ENCODE measurements at regions of chr18 and their contacts with region 1.

Region 1: GRCh38 chr18:3454365-3455089 is 4.6 kb downstream of the TGIF1 start:
- DNase-seq: no peak
- ATAC-seq: no peak
- H3K4me3 Mint-ChIP-seq: peak overlapping the region; percentile 93
- H3K27ac Mint-ChIP-seq: peak overlapping the region; percentile 95
- H3K4me1 Mint-ChIP-seq: peaks cover 57% of the 10 kb centered on the region
- H3K27me3 Mint-ChIP-seq: no peaks in the 10 kb centered on the region
- CTCF ChIP-seq: no peak

Region 2: DNA sequence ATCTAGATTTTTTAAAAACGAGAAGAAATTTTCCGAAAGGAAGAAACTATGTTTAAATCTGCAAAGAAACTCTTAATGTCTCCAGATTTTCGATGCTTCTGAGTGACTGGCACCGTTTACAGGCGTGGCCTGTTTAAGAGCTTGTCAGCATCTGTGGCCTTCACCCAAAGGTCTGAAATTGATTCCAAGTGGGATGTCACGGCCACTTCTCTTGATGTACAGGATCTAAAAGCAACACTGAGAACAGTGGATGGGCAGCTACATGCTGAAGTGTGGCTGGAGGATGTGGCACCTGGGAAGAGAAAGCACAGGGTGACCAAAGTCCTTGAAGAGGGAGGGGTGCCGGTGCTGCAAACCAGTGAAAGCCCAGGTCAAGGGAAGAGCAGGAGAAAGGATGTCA is 579.8 kb before region 1 on chr18:
- CTCF ChIA-PET with region 1: no interaction called
- POLR2A ChIA-PET with region 1: no interaction called
- intact Hi-C with region 1: no loop called
- DNase-seq: no peak
- ATAC-seq: no peak
- H3K4me3 Mint-ChIP-seq: no peak overlapping the region
- H3K27ac Mint-ChIP-seq: no peak overlapping the region
- H3K4me1 Mint-ChIP-seq: no peaks in the 10 kb centered on the region
- H3K27me3 Mint-ChIP-seq: no peaks in the 10 kb centered on the region
- CTCF ChIP-seq: no peak

Region 3: DNA sequence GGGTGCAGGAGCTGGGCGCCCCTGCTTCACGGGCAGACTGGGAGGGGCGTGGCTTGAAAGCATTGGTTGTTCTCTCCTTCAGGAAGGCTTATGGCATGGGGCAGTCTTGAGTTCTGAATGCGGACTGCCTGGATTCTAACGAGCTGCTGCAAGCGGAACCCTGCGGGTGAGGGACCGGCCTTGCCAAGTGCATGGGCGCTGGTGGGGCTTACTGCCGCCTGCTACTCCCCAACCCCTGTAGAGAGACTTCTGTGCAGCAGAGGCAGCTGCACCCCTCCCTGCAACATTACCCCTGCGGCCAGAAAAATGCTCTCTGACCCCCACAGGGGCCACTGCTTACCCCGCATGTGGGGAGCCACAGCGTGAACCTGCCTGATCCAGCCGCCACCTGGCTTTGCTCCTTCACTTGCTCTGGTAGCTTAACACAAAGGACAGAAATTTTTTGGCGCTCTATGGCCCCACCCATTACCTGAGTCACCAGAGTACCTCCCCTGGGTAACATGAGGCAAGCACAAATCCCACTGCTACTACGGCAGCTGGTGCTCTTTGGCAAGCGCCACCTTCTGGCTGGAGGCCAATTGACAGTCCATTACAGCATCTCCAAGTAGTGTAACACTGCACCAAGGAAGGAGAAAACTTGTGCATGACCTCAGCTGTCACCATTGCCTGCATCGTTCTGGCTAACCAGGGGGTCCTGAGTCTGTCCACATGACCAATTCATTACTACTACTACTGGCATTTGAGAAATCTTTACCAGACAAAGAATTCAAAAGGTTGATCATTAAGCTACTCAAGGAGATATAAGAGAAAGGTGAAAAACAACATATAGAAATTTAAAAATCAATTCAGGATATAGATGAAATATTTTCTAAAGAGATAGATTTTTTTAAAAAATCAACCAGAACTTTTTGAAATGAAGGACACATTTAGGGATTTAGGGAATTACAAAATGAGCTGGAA is 157.2 kb before region 1 on chr18:
- CTCF ChIA-PET with region 1: interaction called, 26 read pairs
- POLR2A ChIA-PET with region 1: interaction called, 20 read pairs
- intact Hi-C with region 1: loop called (anchors 1 kb)
- DNase-seq: peak; percentile 82
- ATAC-seq: peak; percentile 99
- H3K4me3 Mint-ChIP-seq: peak overlapping the region; percentile 95
- H3K27ac Mint-ChIP-seq: peak overlapping the region; percentile 83
- H3K4me1 Mint-ChIP-seq: peaks cover 11% of the 10 kb centered on the region
- H3K27me3 Mint-ChIP-seq: peaks cover 6% of the 10 kb centered on the region
- CTCF ChIP-seq: no peak

Region 4: DNA sequence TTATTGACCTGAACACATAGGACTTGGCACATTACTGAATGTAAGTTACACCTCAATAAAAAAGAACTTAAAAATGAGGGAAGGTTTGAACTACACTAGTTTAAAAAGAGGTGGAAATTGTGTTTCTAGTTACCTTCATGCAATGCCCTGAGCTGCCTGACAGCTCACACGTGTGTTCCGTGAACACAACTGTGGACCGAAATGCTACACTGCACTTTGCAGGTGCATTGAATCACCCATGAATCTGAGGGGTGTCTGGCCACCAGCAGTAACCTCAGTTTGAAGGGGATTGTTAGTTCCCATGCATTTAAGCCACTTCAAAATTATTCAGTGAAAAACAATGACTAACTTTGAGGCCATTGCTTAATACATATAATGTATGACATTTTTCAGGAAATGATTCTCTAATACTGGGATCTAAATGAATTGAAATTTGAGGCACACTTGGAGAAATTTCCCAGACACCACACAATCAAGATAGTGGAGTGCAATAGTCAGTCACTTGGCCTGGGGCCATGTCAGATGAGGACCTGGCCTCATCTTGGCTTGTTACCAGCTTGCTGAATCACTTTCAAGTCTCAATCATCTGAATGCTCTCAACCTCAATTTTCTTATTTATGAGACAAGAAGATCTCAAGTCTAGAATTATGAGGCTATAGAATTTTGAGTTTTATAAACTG is 133.3 kb before region 1 on chr18:
- CTCF ChIA-PET with region 1: interaction called, 19 read pairs
- POLR2A ChIA-PET with region 1: interaction called, 6 read pairs
- intact Hi-C with region 1: loop called (anchors 1 kb)
- DNase-seq: no peak
- ATAC-seq: no peak
- H3K4me3 Mint-ChIP-seq: no peak overlapping the region
- H3K27ac Mint-ChIP-seq: no peak overlapping the region
- H3K4me1 Mint-ChIP-seq: peaks cover 24% of the 10 kb centered on the region
- H3K27me3 Mint-ChIP-seq: no peaks in the 10 kb centered on the region
- CTCF ChIP-seq: no peak

Region 5: DNA sequence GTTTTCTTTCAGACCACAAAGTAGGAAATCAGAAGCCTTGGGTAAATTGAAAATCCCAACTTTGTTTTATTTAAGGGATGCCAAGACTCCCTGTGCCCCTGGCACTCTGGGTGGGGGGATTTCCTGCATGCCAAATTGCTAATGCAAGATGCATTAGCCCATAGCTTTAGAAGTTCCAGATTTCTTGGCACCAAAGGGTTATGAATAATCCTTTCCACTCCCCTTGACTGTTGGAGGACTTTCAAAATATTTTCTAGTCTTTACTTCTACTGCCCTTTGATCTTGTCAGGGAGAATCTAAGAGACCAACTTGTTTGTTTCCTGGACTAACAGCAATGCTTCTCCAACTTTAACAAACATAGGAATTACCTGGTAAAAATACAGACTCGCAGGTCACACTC is 86.3 kb before region 1 on chr18:
- CTCF ChIA-PET with region 1: no interaction called
- POLR2A ChIA-PET with region 1: no interaction called
- intact Hi-C with region 1: no loop called
- DNase-seq: no peak
- ATAC-seq: no peak
- H3K4me3 Mint-ChIP-seq: no peak overlapping the region
- H3K27ac Mint-ChIP-seq: no peak overlapping the region
- H3K4me1 Mint-ChIP-seq: no peaks in the 10 kb centered on the region
- H3K27me3 Mint-ChIP-seq: no peaks in the 10 kb centered on the region
- CTCF ChIP-seq: no peak

Region 6: GRCh38 chr18:3380384-3380961 is 74.1 kb before region 1 on chr18:
- CTCF ChIA-PET with region 1: interaction called, 10 read pairs
- POLR2A ChIA-PET with region 1: interaction called, 54 read pairs
- intact Hi-C with region 1: loop called (anchors 1 kb)
- DNase-seq: no peak
- ATAC-seq: peak; percentile 66
- H3K4me3 Mint-ChIP-seq: no peak overlapping the region
- H3K27ac Mint-ChIP-seq: no peak overlapping the region
- H3K4me1 Mint-ChIP-seq: peaks cover 21% of the 10 kb centered on the region
- H3K27me3 Mint-ChIP-seq: no peaks in the 10 kb centered on the region
- CTCF ChIP-seq: no peak

Region 7: GRCh38 chr18:3466045-3466444 is 11.5 kb after region 1 on chr18:
- CTCF ChIA-PET with region 1: interaction called, 13 read pairs
- POLR2A ChIA-PET with region 1: interaction called, 9 read pairs
- intact Hi-C with region 1: no loop called
- DNase-seq: no peak
- ATAC-seq: no peak
- H3K4me3 Mint-ChIP-seq: no peak overlapping the region
- H3K27ac Mint-ChIP-seq: no peak overlapping the region
- H3K4me1 Mint-ChIP-seq: peaks cover 8% of the 10 kb centered on the region
- H3K27me3 Mint-ChIP-seq: no peaks in the 10 kb centered on the region
- CTCF ChIP-seq: no peak

Region 8: GRCh38 chr18:3493501-3494244 is 39.1 kb after region 1 on chr18:
- CTCF ChIA-PET with region 1: interaction called, 15 read pairs
- POLR2A ChIA-PET with region 1: interaction called, 14 read pairs
- intact Hi-C with region 1: loop called (anchors 2 kb)
- DNase-seq: no peak
- ATAC-seq: peak; percentile 35
- H3K4me3 Mint-ChIP-seq: peak overlapping the region; percentile 83
- H3K27ac Mint-ChIP-seq: peak overlapping the region; percentile 88
- H3K4me1 Mint-ChIP-seq: peaks cover 43% of the 10 kb centered on the region
- H3K27me3 Mint-ChIP-seq: peaks cover 2% of the 10 kb centered on the region
- CTCF ChIP-seq: no peak

Region 9: DNA sequence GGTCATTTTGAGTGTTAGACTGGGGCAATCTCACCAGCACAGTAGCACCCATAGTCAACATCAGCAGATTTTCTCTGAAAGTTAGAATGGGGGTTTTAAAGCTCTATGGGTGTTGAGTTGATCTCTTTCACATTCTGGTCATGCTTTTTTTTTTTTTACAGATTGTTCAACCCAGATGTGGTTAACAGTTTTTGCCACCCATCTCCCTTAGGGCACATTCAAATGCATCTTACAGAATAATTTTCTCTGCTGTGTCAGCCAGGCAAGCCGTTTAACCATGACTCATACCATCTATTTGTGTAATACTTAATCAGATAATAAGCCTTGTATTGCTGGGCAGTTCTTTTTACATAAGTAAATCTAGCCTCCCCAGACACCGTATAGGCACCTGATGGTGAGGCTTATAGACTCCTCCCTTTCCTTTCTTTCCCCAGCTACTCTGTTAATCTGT is 57.4 kb after region 1 on chr18:
- CTCF ChIA-PET with region 1: no interaction called
- POLR2A ChIA-PET with region 1: no interaction called
- intact Hi-C with region 1: no loop called
- DNase-seq: no peak
- ATAC-seq: peak; percentile 86
- H3K4me3 Mint-ChIP-seq: no peak overlapping the region
- H3K27ac Mint-ChIP-seq: peak overlapping the region; percentile 31
- H3K4me1 Mint-ChIP-seq: peaks cover 11% of the 10 kb centered on the region
- H3K27me3 Mint-ChIP-seq: no peaks in the 10 kb centered on the region
- CTCF ChIP-seq: no peak

Region 10: DNA sequence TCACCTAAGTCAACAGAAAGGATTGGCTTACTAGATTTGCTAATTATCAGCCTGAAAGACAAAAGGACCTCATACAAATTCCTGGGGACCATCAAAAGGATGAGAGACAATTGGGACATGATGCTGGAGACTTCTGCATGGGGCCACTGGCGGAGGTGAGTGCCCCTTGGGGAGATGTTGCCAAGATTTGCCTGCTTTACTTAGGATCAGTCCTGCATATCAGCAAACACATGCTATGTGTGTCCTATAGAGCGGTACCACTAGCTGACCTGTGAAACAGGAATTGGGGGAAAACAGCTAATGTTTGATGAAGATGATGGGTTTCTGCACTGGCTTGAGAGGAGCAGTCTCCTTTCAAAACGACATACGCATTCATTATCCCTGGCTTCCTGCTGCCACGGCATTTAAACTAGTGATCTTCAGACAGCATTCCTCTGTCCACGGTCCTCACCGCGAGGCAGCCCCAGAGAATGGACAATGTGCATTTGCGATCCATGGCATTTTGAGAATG is 99.6 kb after region 1 on chr18:
- CTCF ChIA-PET with region 1: no interaction called
- POLR2A ChIA-PET with region 1: no interaction called
- intact Hi-C with region 1: no loop called
- DNase-seq: no peak
- ATAC-seq: no peak
- H3K4me3 Mint-ChIP-seq: no peak overlapping the region
- H3K27ac Mint-ChIP-seq: no peak overlapping the region
- H3K4me1 Mint-ChIP-seq: no peaks in the 10 kb centered on the region
- H3K27me3 Mint-ChIP-seq: no peaks in the 10 kb centered on the region
- CTCF ChIP-seq: no peak

Region 11: GRCh38 chr18:3604498-3605408 is 150.2 kb after region 1 on chr18:
- CTCF ChIA-PET with region 1: interaction called, 8 read pairs
- POLR2A ChIA-PET with region 1: interaction called, 19 read pairs
- intact Hi-C with region 1: no loop called
- DNase-seq: no peak
- ATAC-seq: peak; percentile 73
- H3K4me3 Mint-ChIP-seq: no peak overlapping the region
- H3K27ac Mint-ChIP-seq: no peak overlapping the region
- H3K4me1 Mint-ChIP-seq: peaks cover 3% of the 10 kb centered on the region
- H3K27me3 Mint-ChIP-seq: no peaks in the 10 kb centered on the region
- CTCF ChIP-seq: no peak

Measured in activated B cell treated with CpG ODN at 0.5 μM for 24 hours (primary cell).